Natural killer cell (primary cell): ENCODE measurements at regions of chr9 and their contacts with region 1.

Region 1: DNA sequence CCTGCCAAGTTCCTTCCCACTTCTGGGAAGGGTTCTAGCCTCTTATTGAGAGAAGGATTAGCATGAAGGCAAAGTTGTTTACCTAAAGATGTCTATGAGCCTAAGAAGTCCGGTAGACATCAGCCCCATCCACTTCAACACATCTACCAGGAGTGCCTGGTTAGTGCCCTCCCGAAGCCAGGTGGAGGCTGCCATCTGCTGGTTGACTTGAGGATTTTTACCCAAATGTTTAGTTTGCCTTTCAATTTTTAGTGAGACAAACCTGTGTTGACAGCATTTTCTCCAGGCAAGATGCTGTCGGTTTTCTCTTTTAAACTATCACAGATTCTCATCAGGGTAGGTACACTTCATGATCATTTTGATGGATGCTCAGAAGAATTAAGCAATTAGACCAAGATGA is 83.6 kb upstream of the TNFSF8 start:
- DNase-seq: peak; percentile 56 to 90
- ATAC-seq: peak; percentile 76 to 85 (median 78)
- H3K4me3 ChIP-seq: no peak overlapping the region
- H3K4me3 Mint-ChIP-seq: no peak overlapping the region
- H3K27ac ChIP-seq: no peak overlapping the region
- H3K27ac Mint-ChIP-seq: no peak overlapping the region
- H3K4me1 ChIP-seq: no peaks in the 10 kb centered on the region
- H3K4me1 Mint-ChIP-seq: no peaks in the 10 kb centered on the region
- H3K27me3 ChIP-seq: no peaks in the 10 kb centered on the region
- H3K27me3 Mint-ChIP-seq: peaks cover 6 to 10% of the 10 kb centered on the region in 2 donors
- CTCF ChIP-seq: peak; percentile 93

Region 2: DNA sequence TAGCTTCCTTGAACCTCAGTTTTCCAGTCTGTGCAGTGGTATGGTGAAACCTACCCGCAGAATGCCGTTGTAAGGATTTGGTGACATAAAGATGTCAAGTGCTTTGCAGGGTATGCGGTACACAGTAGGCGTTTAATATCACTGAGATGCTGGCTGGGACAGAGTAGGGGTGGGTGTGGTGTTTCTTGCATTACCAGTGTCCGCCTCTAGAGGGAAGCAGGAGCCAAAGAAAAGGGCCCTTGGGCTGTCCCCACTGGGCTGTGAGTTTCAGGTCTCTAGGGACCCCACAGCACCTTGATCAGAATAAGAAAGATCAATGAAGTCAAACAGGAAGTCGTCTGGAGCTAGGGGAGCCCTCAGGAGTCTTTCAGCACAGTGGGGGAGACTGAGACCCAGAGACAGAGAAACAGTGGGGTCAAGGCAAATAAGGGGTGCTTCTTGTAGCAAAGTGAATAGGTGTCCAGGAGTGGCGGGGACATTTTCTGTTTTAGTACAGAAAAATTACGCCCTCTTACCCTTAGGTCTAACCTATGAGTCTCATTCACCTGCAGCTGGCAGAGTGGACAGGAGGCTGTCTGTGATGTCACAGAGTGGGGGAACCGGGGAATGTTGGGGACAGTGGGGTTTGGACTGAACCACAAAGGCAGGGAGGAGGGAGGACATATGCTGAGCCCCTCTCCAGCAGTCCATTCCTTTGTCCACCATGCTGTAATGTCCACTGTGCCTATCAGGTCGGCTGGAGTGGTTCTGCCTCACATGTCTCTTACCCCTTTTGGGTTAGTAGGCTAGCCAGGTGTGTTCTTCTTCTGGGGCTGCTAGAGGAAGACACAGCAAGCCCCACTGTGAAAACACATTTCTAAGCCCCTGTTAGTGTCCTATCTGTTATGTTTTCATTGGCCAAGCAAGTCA is 351.7 kb before region 1 on chr9:
- intact Hi-C with region 1: loop called (anchors 5 kb)
- DNase-seq: peak; percentile 39 to 77
- ATAC-seq: peak; percentile 75 to 88 (median 87)
- H3K4me3 ChIP-seq: no peak overlapping the region
- H3K4me3 Mint-ChIP-seq: no peak overlapping the region
- H3K27ac ChIP-seq: no peak overlapping the region
- H3K27ac Mint-ChIP-seq: no peak overlapping the region
- H3K4me1 ChIP-seq: no peaks in the 10 kb centered on the region
- H3K4me1 Mint-ChIP-seq: no peaks in the 10 kb centered on the region
- H3K27me3 ChIP-seq: peaks cover 3% of the 10 kb centered on the region
- H3K27me3 Mint-ChIP-seq: peaks cover 13 to 31% of the 10 kb centered on the region in 2 donors
- CTCF ChIP-seq: peak; percentile 72

Region 3: GRCh38 chr9:114681594-114682332 is 332.2 kb before region 1 on chr9 and contains the start of gene TEX48:
- intact Hi-C with region 1: loop called (anchors 1 kb)
- DNase-seq: peak; percentile 30 to 92
- ATAC-seq: peak; percentile 87 to 90 (median 88)
- H3K4me3 ChIP-seq: no peak within 1 kb of the TSS
- H3K4me3 Mint-ChIP-seq: no peak within 1 kb of the TSS
- H3K27ac ChIP-seq: no peak within 1 kb of the TSS
- H3K27ac Mint-ChIP-seq: no peak within 1 kb of the TSS
- H3K4me1 ChIP-seq: peaks cover 6% of the 10 kb centered on the region
- H3K4me1 Mint-ChIP-seq: peaks cover 0 to 5% of the 10 kb centered on the region in 2 donors
- H3K27me3 ChIP-seq: no peaks in the 10 kb centered on the region
- H3K27me3 Mint-ChIP-seq: peaks cover 4 to 27% of the 10 kb centered on the region in 2 donors
- CTCF ChIP-seq: peak; percentile 81
- total RNA-seq, gene TEX48: not detected

Region 4: DNA sequence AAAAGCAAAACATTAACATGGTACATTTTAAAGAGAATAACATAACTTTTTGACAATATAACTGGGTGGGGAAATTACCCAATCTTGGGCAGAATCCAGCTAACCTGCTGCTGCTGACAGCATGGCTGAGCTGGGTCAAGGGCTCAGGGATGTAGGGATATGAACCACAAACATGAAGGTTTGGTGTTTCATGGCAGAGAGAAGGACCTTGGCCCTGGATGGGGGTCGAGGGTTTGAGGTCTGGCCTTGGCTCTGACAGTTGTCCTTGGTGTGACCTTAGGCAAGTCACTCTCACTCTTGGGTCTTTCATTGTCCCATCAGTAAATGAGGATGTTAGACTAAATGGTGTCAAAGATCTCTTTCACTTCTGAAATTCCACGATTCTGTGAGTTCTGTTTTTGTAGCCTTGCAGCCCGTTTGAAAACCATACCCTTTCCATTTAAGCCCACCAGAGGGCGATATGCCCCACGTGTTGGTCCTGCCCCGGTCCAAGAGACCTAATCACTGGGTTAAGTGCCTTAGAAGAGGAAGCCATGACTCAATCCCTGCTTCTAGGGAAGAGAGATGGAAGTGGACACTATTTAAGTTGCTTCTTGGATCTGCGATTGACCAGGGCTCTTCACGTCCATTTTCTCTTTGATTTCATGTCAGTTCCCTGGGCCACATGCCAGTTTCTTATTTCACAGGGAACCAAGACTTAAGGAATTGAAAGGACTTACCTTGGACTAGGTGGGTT is 275.2 kb before region 1 on chr9:
- intact Hi-C with region 1: loop called (anchors 1 kb)
- DNase-seq: peak; percentile 55 to 90
- ATAC-seq: peak; percentile 87 to 92 (median 88)
- H3K4me3 ChIP-seq: no peak overlapping the region
- H3K4me3 Mint-ChIP-seq: no peak overlapping the region
- H3K27ac ChIP-seq: no peak overlapping the region
- H3K27ac Mint-ChIP-seq: no peak overlapping the region
- H3K4me1 ChIP-seq: peaks cover 18% of the 10 kb centered on the region
- H3K4me1 Mint-ChIP-seq: peaks cover 9 to 16% of the 10 kb centered on the region in 2 donors
- H3K27me3 ChIP-seq: no peaks in the 10 kb centered on the region
- H3K27me3 Mint-ChIP-seq: no peaks in the 10 kb centered on the region
- CTCF ChIP-seq: peak; percentile 82